ENCODE measurements at regions of chr6 and their contacts with region 1.

Region 1: DNA sequence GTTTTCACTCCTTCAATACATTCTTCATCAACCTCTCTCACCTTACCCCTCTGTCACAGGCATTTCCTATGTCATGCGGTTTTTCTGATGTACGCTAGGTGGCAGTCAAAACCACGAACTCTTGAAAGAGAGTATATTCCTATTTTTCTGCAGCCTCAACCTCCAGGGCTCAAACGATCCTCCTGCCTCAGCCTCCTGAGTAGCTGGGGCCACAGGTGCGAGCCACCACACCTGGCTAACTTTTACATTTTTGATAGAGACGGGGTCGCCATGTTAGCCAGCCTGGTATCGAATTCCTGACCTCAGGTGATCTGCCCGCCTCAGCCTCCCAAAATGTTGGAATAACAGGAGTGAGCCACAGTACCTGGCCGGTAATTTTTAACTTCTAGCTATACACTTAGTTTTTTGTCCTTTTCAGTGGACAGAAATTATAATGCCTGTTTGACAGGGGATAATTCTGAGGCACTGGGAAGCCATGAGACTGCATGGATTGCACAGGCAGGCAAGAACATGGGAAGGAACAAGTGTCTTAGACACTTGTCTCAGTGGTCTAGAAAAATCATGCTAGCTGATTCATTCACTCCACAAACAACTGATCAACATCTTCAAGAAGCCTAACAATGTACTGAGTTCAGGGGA is 22.5 kb upstream of the HFE start:
- DNase-seq: peak in 1 of 4 donors; percentile 53
- ATAC-seq: peak; percentile 84
- H3K4me3 ChIP-seq: no peak overlapping the region
- H3K27ac ChIP-seq: no peak overlapping the region
- H3K4me1 ChIP-seq: peaks cover 0 to 15% of the 10 kb centered on the region in 2 donors
- H3K27me3 ChIP-seq: no peaks in the 10 kb centered on the region
- CTCF ChIP-seq: peak; percentile 60 to 79

Region 2: GRCh38 chr6:26097268-26097875 is 32.6 kb after region 1 on chr6:
- intact Hi-C with region 1: loop called in 1 of 2 experiments (anchors 5 kb)
- DNase-seq: peak in 3 of 4 donors; percentile 53 to 78 (median 54)
- ATAC-seq: peak; percentile 96
- H3K4me3 ChIP-seq: no peak overlapping the region
- H3K27ac ChIP-seq: no peak overlapping the region
- H3K4me1 ChIP-seq: peaks cover 0 to 6% of the 10 kb centered on the region in 2 donors
- H3K27me3 ChIP-seq: no peaks in the 10 kb centered on the region
- CTCF ChIP-seq: peak; percentile 69 to 77